Endothelial cell of umbilical vein (primary cell): ENCODE measurements at regions of chr5 and their contacts with region 1.

Region 1: DNA sequence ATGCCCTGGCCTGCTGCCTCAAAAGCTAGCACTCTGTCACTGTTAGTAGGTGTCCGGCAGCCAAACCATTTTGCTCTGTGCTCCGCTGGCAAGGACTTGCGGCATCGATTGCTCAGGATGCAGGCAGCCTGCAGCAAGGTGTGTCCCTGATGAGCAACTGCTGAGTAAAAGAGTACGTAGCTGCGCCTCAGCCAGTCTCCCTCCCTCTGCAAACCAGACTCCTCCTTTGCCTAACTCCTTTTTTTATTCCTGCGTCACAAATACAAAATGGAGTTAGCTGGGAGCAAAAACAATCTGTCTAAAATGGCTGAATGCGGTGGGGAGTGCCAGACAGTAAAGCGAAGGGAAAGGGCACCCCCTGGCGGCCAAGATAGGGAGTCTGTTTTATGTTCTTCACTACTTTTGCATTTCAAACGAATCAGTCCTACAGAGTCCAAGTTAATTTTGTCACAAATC is 61.1 kb downstream of the DIAPH1 start:
- DNase-seq: peak; percentile 94
- H3K4me3 ChIP-seq: peak overlapping the region in 2 of 3 experiments; percentile 24 to 25
- H3K27ac ChIP-seq: peak overlapping the region; percentile 45
- H3K4me1 ChIP-seq: peaks cover 35% of the 10 kb centered on the region
- H3K27me3 ChIP-seq: no peaks in the 10 kb centered on the region
- CTCF ChIP-seq: peak; percentile 79 to 87
- POLR2A ChIP-seq: no peak

Region 2: DNA sequence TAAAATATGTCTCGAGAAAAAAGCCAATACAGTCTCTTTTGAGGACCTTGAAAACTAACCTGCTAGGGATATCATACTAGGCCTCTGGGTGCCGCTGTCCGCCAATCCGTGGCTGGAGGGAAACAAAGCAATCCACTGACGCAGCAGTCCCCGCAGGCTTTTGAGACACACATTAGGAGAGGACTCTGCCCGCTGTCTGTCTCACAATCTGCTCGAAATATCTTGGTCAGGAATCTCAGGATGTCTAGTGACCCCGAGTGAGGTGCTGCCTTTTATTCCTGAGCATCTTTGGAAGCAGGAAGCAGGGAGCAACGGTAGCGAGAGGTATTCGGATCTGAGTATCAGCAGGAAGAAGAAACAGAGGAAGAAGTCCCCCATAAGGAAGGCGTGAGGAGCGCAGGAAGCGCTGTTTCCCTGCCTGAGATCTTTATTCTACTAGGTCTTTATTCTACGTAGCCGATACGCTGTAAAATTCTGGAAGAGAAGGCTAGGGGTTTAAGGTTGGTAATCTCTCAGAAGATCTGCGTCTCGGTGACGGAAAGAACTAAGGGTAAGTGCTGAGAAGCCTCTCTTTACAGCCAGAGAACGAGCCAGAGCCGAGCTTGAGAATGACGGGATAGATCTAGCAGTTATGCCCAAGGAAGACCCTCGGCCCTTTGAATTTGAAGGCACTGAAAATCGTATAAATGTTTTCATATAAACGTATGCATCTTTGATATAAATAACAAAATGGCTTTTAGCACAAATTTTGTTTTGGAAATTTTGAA is 231.4 kb before region 1 on chr5:
- CTCF ChIA-PET with region 1: interaction called, 11 read pairs
- POLR2A ChIA-PET with region 1: no interaction called
- dilution Hi-C with region 1: no loop called
- intact Hi-C with region 1: no loop called
- DNase-seq: peak; percentile 77
- H3K4me3 ChIP-seq: peak overlapping the region; percentile 27 to 74 (median 50)
- H3K27ac ChIP-seq: no peak overlapping the region
- H3K4me1 ChIP-seq: no peaks in the 10 kb centered on the region
- H3K27me3 ChIP-seq: peaks cover 14 to 31% of the 10 kb centered on the region in 2 experiments
- CTCF ChIP-seq: peak; percentile 65 to 70
- POLR2A ChIP-seq: no peak

Region 3: GRCh38 chr5:141369994-141370848 is 187.5 kb before region 1 on chr5 and contains the start of gene PCDHGB3:
- CTCF ChIA-PET with region 1: interaction called, 19 read pairs
- POLR2A ChIA-PET with region 1: no interaction called
- dilution Hi-C with region 1: no loop called
- intact Hi-C with region 1: loop called (anchors 1 kb)
- DNase-seq: peak; percentile 40
- H3K4me3 ChIP-seq: peak within 1 kb of the TSS in 1 of 3 experiments; percentile 23
- H3K27ac ChIP-seq: no peak within 1 kb of the TSS
- H3K4me1 ChIP-seq: no peaks in the 10 kb centered on the region
- H3K27me3 ChIP-seq: peaks cover 40 to 91% of the 10 kb centered on the region in 2 experiments
- CTCF ChIP-seq: peak in 1 of 2 donors; percentile 24
- POLR2A ChIP-seq: no peak
- total RNA-seq, gene PCDHGB3: 1.7 and 2.0 TPM in 2 replicates

Region 4: DNA sequence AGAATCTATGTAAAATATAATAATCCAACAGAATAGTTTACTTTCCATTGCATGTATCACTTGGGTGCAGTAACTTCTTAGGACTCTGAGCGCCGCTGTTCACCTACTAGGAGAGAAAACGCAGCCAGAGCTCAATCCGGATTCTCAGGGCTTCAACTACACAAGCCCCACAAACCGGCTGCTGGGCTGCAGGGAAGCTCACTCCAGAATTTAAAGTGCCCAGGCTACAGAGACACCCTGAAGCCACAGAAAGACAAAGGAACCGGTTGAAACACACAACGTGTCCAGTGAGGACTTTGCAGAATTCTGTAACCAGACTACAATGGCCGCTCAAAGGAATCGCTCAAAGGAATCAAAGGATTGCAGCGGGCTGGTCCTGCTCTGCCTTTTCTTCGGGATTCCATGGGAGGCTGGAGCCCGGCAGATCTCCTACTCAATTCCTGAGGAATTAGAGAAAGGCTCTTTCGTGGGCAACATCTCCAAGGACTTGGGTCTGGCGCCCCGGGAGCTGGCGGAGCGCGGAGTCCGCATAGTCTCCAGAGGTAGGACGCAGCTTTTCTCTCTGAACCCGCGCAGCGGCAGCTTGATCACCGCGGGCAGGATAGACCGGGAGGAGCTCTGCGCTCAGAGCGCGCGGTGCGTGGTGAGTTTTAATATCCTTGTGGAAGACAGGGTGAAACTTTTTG is 144.7 kb before region 1 on chr5 and contains the start of gene PCDHGA10:
- CTCF ChIA-PET with region 1: interaction called, 335 read pairs
- POLR2A ChIA-PET with region 1: interaction called, 4 read pairs
- dilution Hi-C with region 1: no loop called
- intact Hi-C with region 1: loop called (anchors 1 kb)
- DNase-seq: peak; percentile 72
- H3K4me3 ChIP-seq: peak within 1 kb of the TSS; percentile 14 to 72 (median 34)
- H3K27ac ChIP-seq: no peak within 1 kb of the TSS
- H3K4me1 ChIP-seq: peaks cover 6% of the 10 kb centered on the region
- H3K27me3 ChIP-seq: peaks cover 48 to 84% of the 10 kb centered on the region in 2 experiments
- CTCF ChIP-seq: peak; percentile 58 to 76
- POLR2A ChIP-seq: no peak
- total RNA-seq, gene PCDHGA10: 4.4 and 5.8 TPM in 2 replicates

Region 5: GRCh38 chr5:141475625-141476131 is 82.0 kb before region 1 on chr5 and contains the start of gene PCDHGC3:
- CTCF ChIA-PET with region 1: interaction called, 18 read pairs
- POLR2A ChIA-PET with region 1: interaction called, 3 read pairs
- dilution Hi-C with region 1: no loop called
- intact Hi-C with region 1: loop called (anchors 1 kb)
- DNase-seq: peak; percentile 96
- H3K4me3 ChIP-seq: peak within 1 kb of the TSS; percentile 32 to 70 (median 50)
- H3K27ac ChIP-seq: no peak within 1 kb of the TSS
- H3K4me1 ChIP-seq: peaks cover 7% of the 10 kb centered on the region
- H3K27me3 ChIP-seq: peaks cover 0 to 5% of the 10 kb centered on the region in 2 experiments
- CTCF ChIP-seq: peak in 1 of 2 donors; percentile 8
- POLR2A ChIP-seq: no peak
- total RNA-seq, gene PCDHGC3: 25.4 and 36.1 TPM in 2 replicates

Region 6: GRCh38 chr5:141532726-141533125 is 25.0 kb before region 1 on chr5:
- CTCF ChIA-PET with region 1: interaction called, 17 read pairs
- POLR2A ChIA-PET with region 1: interaction called, 4 read pairs
- dilution Hi-C with region 1: no loop called
- intact Hi-C with region 1: no loop called
- DNase-seq: peak; percentile 30
- H3K4me3 ChIP-seq: no peak overlapping the region
- H3K27ac ChIP-seq: no peak overlapping the region
- H3K4me1 ChIP-seq: peaks cover 5% of the 10 kb centered on the region
- H3K27me3 ChIP-seq: no peaks in the 10 kb centered on the region
- CTCF ChIP-seq: no peak
- POLR2A ChIP-seq: no peak

Region 7: GRCh38 chr5:141598391-141599350 is 41.0 kb after region 1 on chr5:
- CTCF ChIA-PET with region 1: no interaction called
- POLR2A ChIA-PET with region 1: no interaction called
- dilution Hi-C with region 1: no loop called
- intact Hi-C with region 1: no loop called
- DNase-seq: no peak
- H3K4me3 ChIP-seq: no peak overlapping the region
- H3K27ac ChIP-seq: no peak overlapping the region
- H3K4me1 ChIP-seq: peaks cover 16% of the 10 kb centered on the region
- H3K27me3 ChIP-seq: no peaks in the 10 kb centered on the region
- CTCF ChIP-seq: no peak
- POLR2A ChIP-seq: no peak

Region 8: GRCh38 chr5:141757402-141757801 is 199.7 kb after region 1 on chr5:
- CTCF ChIA-PET with region 1: no interaction called
- POLR2A ChIA-PET with region 1: no interaction called
- dilution Hi-C with region 1: no loop called
- intact Hi-C with region 1: no loop called
- DNase-seq: peak; percentile 57
- H3K4me3 ChIP-seq: no peak overlapping the region
- H3K27ac ChIP-seq: no peak overlapping the region
- H3K4me1 ChIP-seq: no peaks in the 10 kb centered on the region
- H3K27me3 ChIP-seq: peaks cover 23 to 36% of the 10 kb centered on the region in 2 experiments
- CTCF ChIP-seq: peak; percentile 54 to 77
- POLR2A ChIP-seq: no peak

Region 9: GRCh38 chr5:141805874-141806595 is 248.3 kb after region 1 on chr5:
- CTCF ChIA-PET with region 1: no interaction called
- POLR2A ChIA-PET with region 1: no interaction called
- dilution Hi-C with region 1: no loop called
- intact Hi-C with region 1: no loop called
- DNase-seq: peak; percentile 86
- H3K4me3 ChIP-seq: no peak overlapping the region
- H3K27ac ChIP-seq: peak overlapping the region; percentile 81
- H3K4me1 ChIP-seq: peaks cover 25% of the 10 kb centered on the region
- H3K27me3 ChIP-seq: peaks cover 0 to 1% of the 10 kb centered on the region in 2 experiments
- CTCF ChIP-seq: no peak
- POLR2A ChIP-seq: no peak